GM12878 (cell line): ENCODE measurements at regions of chr3 and their contacts with region 1.

Region 1: DNA sequence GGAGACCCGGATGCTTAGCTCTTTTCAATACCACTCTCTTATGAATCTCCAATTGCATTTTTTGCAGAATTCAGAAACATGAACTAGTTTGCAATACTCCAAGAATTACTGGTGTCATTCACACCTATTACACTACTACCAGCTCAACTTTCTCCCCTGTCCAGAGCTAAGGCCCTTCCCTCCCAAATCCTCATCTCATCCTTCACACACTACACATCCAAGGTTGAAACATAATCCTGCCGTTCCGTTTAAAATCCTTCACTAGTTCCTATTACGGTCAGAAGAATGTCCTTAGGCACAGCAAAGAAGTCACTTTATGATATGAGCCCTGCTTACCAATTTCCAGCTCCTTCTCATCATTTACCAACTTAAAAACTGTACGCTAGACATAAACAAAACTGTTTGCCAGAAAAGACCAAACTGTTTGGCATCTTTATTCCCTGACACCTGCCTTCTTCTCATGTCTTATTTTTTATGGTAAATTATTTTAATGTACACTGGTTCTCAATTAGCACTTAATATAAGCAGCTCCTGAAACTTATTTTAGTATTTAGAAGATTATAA is 22.6 kb downstream of the TBL1XR1 start:
- DNase-seq: no peak
- ATAC-seq: no peak
- H3K4me3 ChIP-seq: no peak overlapping the region
- H3K27ac ChIP-seq: no peak overlapping the region
- H3K4me1 ChIP-seq: no peaks in the 10 kb centered on the region
- H3K27me3 ChIP-seq: no peaks in the 10 kb centered on the region
- CTCF ChIP-seq: no peak
- EP300 ChIP-seq: no peak
- POLR2A ChIP-seq: no peak
- RAD21 ChIP-seq: no peak

Region 2: DNA sequence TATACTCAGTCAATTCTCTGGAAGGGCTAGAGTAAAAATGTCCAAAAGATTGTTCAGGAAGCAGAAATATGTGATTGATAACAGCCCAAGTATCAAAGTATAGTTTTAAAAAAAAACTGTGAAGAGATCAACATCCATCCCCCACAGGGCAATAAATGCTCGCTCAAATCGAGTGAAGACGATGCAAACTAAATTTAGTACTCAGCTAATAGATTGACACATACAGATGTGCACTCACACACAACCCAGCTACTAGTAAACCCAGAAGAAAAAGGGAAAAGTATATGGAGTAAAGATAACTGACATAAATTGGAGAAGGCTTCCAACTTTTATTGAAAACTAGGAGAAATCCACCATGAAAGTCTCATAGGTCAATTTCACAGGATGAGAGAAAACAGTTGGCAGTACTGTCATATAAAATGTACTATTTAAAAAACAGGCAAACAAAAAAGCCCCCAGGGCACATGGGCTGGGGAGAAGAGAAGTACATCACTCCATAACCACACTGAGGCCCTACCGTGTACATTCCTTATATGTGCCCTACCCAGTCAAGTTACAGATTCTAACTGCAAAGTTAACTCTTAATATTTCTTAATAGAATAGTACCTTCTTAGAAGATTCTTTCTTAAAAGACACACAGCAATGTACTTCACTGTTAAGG is 103.1 kb before region 1 on chr3:
- CTCF ChIA-PET with region 1: no interaction called
- POLR2A ChIA-PET with region 1: no interaction called
- RAD21 ChIA-PET with region 1: no interaction called
- SMC1A ChIA-PET with region 1: no interaction called
- in situ Hi-C with region 1: no loop called
- intact Hi-C with region 1: no loop called
- DNase-seq: no peak
- ATAC-seq: no peak
- H3K4me3 ChIP-seq: no peak overlapping the region
- H3K27ac ChIP-seq: no peak overlapping the region
- H3K4me1 ChIP-seq: no peaks in the 10 kb centered on the region
- H3K27me3 ChIP-seq: no peaks in the 10 kb centered on the region
- CTCF ChIP-seq: no peak
- EP300 ChIP-seq: no peak
- POLR2A ChIP-seq: no peak
- RAD21 ChIP-seq: no peak

Region 3: GRCh38 chr3:177185035-177185574 is 10.4 kb after region 1 on chr3:
- CTCF ChIA-PET with region 1: no interaction called
- POLR2A ChIA-PET with region 1: interaction called, 3 read pairs
- RAD21 ChIA-PET with region 1: interaction called, 4 read pairs
- SMC1A ChIA-PET with region 1: interaction called, 11 read pairs
- in situ Hi-C with region 1: no loop called
- intact Hi-C with region 1: no loop called
- DNase-seq: no peak
- ATAC-seq: peak; percentile 59
- H3K4me3 ChIP-seq: no peak overlapping the region
- H3K27ac ChIP-seq: peak overlapping the region; percentile 56
- H3K4me1 ChIP-seq: peaks cover 8% of the 10 kb centered on the region
- H3K27me3 ChIP-seq: no peaks in the 10 kb centered on the region
- CTCF ChIP-seq: no peak
- EP300 ChIP-seq: no peak
- POLR2A ChIP-seq: no peak
- RAD21 ChIP-seq: no peak